ENCODE measurements at regions of chr4 and their contacts with region 1.

Region 1: DNA sequence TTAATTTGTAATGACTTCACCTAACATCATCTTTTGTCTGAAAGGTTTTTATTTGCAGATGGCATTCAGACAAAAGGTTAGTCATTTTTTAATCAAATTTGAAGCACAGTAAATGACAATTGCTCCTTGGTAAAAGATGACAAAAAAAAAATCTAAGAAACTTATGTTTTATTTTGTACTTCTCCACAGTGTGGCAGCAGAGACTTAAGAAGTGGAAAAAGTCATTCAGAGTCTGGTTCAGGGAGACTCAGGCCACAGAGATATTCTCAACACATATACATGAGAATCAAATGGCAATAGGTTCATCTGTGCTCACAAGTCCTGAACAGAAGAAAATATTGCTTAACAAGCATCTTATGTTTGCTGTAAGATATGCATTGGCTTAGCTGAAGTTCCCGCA is 436.2 kb downstream of the KCNIP4 start:
- DNase-seq: no peak
- H3K4me3 Mint-ChIP-seq: no peak overlapping the region
- H3K27ac Mint-ChIP-seq: no peak overlapping the region
- H3K4me1 Mint-ChIP-seq: no peaks in the 10 kb centered on the region
- H3K27me3 Mint-ChIP-seq: no peaks in the 10 kb centered on the region

Region 2: DNA sequence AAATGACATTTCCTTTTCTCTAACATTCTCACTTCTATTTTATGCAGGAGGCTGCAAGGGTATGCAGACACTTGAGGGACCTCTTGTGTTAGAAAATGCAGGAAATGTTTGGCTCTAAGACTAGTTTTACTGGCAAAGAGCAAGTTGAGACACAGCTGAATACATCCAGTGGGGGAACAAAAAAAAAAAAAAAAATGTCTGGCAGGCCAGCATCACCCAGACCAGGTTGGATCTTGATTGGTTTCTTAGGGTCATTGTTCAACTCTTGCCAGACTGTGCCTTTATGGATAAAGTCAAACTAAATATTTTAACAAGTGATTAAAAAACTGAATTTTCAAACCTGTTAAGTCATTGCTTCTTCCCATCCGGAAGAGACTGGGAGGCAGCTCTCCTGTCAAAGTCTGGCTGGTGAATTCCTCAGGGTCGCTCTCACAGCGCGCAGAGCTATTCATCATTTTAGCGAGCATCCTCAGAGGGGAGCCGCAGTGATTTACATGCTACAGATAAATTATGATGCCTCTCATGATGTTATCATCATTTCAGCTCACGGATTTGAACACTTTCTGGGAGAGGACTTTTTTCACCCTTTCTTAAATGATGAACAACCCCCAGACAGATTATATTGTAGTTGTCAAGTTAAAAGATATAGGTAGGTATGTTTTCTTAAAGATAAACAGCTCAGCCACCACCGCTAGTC is 835.7 kb before region 1 on chr4:
- CTCF ChIA-PET with region 1: no interaction called
- POLR2A ChIA-PET with region 1: no interaction called
- intact Hi-C with region 1: no loop called
- DNase-seq: no peak
- H3K4me3 Mint-ChIP-seq: no peak overlapping the region
- H3K27ac Mint-ChIP-seq: no peak overlapping the region
- H3K4me1 Mint-ChIP-seq: no peaks in the 10 kb centered on the region
- H3K27me3 Mint-ChIP-seq: peaks cover 26% of the 10 kb centered on the region

Region 3: DNA sequence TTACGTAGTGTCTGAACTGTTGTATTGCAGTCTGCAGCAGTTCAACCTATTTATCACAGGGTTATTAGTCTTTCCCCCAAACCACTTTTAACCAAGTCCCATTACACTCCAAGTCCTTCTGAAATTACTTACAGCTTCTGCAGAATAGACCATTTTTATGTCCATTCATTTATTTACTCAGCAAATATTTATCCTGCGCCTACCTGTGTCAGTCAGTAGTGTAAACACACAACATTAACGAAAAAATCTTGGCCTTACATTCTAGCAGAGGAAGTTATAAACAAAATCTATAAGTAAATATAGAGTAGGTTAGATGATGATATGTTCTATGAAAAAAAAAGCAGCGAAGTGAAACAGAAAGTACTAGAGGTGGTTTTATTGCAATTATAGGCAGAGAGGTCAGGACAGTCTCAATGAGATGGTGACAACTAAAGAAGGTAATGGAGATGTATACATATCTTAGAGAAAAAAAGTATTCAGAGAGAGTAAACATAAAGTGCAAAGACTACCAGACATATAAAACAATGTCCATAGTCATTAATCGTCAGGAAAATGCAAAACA is 98.5 kb before region 1 on chr4:
- CTCF ChIA-PET with region 1: no interaction called
- POLR2A ChIA-PET with region 1: no interaction called
- intact Hi-C with region 1: no loop called
- DNase-seq: no peak
- H3K4me3 Mint-ChIP-seq: no peak overlapping the region
- H3K27ac Mint-ChIP-seq: no peak overlapping the region
- H3K4me1 Mint-ChIP-seq: no peaks in the 10 kb centered on the region
- H3K27me3 Mint-ChIP-seq: no peaks in the 10 kb centered on the region

Region 4: GRCh38 chr4:21765810-21766407 is 253.6 kb after region 1 on chr4:
- CTCF ChIA-PET with region 1: no interaction called
- POLR2A ChIA-PET with region 1: no interaction called
- intact Hi-C with region 1: loop called (anchors 1 kb)
- DNase-seq: peak; percentile 22
- H3K4me3 Mint-ChIP-seq: no peak overlapping the region
- H3K27ac Mint-ChIP-seq: no peak overlapping the region
- H3K4me1 Mint-ChIP-seq: no peaks in the 10 kb centered on the region
- H3K27me3 Mint-ChIP-seq: no peaks in the 10 kb centered on the region

Measured in activated CD4-positive, alpha-beta memory T cell treated with anti-CD3 and anti-CD28 coated beads for 36 hours (primary cell).